AG04449 (cell line): ENCODE measurements at regions of chr2 and their contacts with region 1.

Region 1: GRCh38 chr2:28594289-28595108 is 98.6 kb downstream of the PLB1 start:
- DNase-seq: no peak
- H3K4me3 ChIP-seq: no peak overlapping the region
- CTCF ChIP-seq: peak; percentile 76

Region 2: GRCh38 chr2:28392297-28393113 is 202.0 kb before region 1 on chr2 and contains the start of gene FOSL2:
- CTCF ChIA-PET with region 1: no interaction called
- POLR2A ChIA-PET with region 1: no interaction called
- DNase-seq: peak; percentile 99
- H3K4me3 ChIP-seq: peak within 1 kb of the TSS; percentile 91
- CTCF ChIP-seq: no peak

Region 3: DNA sequence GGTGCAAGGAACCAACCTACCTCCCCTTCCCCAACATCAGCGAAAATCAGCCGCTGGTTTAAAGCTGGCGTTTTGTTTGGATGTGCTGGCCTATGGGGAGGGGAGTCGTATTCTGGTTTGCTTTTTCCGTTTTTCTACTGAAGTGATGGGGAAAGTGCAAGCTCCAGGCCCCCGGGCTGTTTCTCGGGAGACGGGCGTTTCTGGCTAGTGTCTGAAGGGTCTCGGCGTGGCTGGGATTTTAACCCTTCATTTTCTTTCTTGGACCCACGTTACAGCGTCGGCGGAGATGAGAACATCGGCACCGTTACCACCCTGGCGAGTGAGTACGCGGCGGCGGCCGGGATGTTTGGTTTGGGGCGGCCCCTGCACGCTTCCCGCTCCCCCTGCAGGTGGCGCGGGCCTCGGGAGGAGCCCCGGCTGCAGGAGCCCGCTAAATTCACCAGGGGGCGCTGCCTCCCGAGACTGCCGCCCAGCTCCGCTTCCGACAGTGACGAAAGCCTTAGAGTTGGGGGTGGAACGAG is 27.9 kb before region 1 on chr2:
- CTCF ChIA-PET with region 1: interaction called, 59 read pairs
- POLR2A ChIA-PET with region 1: no interaction called
- DNase-seq: no peak
- H3K4me3 ChIP-seq: peak overlapping the region; percentile 68
- CTCF ChIP-seq: peak; percentile 100

Region 4: GRCh38 chr2:28610583-28611201 is 16.2 kb after region 1 on chr2:
- CTCF ChIA-PET with region 1: interaction called, 87 read pairs
- POLR2A ChIA-PET with region 1: no interaction called
- DNase-seq: no peak
- H3K4me3 ChIP-seq: no peak overlapping the region
- CTCF ChIP-seq: no peak

Region 5: DNA sequence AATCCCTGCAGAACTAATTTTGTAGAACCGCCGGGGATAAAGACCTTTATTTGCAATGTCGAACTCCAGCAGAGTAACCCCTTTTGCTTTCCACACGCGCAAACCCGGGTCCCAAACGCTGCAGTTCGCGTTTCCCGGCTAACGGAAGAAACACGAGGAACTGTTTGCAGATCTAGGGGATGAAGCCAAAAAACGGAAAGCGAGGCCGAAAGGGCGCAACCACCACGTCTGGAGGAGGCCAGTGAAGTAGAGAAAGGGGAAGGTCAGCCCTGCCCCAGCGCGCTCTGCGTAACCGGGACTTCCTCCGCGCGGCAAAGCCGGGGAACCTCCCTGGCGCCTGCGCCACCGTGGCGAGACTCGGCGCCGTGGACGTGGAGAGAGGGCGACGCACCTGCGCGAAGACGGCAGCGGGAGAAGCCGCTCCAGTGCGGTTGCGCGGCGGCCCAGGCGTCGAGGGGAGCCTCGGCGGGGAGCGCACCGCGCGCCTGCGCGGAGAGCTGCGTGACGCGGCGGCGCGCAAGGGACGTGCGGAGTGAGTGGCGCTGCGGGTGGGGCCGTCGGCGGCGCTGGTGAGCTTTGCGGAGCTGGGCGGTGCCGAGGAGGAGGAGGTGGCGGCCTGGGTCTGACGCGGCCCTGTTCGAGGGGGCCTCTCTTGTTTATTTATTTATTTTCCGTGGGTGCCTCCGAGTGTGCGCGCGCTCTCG is 156.9 kb after region 1 on chr2 and contains the start of gene PPP1CB:
- CTCF ChIA-PET with region 1: interaction called, 151 read pairs
- POLR2A ChIA-PET with region 1: interaction called, 8 read pairs
- DNase-seq: peak; percentile 65
- H3K4me3 ChIP-seq: peak within 1 kb of the TSS; percentile 91
- CTCF ChIP-seq: peak; percentile 57

Region 6: DNA sequence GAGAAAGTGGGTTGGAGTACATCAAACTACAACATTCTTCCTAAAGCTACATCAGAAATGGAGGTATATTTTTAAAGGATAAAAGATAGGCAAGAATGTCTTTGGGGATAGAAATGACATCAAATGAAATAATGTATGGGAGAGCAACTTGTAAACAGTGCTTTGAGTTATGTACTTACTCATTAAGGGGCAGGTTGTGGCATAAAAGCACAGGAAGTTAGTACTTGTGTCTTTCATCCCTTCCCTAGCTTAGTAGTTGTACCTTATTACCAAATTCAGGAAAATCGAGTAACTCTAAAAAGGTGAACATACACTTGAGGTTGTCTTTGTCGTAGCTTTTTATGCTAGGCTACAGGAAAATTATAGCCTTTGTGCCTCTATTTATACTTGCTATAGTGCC is 186.0 kb after region 1 on chr2:
- CTCF ChIA-PET with region 1: interaction called, 29 read pairs
- POLR2A ChIA-PET with region 1: no interaction called
- DNase-seq: no peak
- H3K4me3 ChIP-seq: no peak overlapping the region
- CTCF ChIP-seq: no peak

Region 7: GRCh38 chr2:28821295-28821958 is 226.9 kb after region 1 on chr2:
- CTCF ChIA-PET with region 1: interaction called, 19 read pairs
- POLR2A ChIA-PET with region 1: no interaction called
- DNase-seq: no peak
- H3K4me3 ChIP-seq: no peak overlapping the region
- CTCF ChIP-seq: peak; percentile 61

Region 8: GRCh38 chr2:29097569-29097968 is 503.1 kb after region 1 on chr2:
- CTCF ChIA-PET with region 1: no interaction called
- POLR2A ChIA-PET with region 1: no interaction called
- DNase-seq: no peak
- H3K4me3 ChIP-seq: no peak overlapping the region
- CTCF ChIP-seq: no peak